GM13976 (cell line): ENCODE measurements at regions of chr9 and their contacts with region 1.

Region 1: GRCh38 chr9:71822456-71822855 is 54.1 kb upstream of the CEMIP2 start:
- DNase-seq: no peak
- CTCF ChIP-seq: no peak

Region 2: DNA sequence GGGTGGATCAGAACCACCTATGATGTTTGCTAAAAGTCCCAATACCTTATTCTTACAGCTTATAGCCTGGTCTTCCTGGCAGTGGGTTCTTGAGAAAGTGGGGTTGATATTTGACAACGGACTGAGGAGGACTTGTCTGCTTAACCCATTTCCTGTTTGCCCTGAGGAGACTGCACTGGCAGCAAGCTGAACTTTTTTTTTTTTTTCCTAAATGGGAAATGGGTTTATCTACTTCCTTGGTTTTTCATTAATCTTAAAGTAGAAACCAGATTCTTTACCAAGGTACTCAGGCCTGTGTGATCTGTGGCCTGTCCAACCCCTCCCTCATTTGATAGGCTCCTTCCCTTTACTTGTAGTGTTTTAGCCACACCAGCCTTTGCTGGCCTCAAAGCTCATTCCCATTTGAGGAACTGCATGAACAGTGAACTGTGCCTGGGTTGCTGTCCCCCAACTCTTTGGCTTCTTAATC is 190.9 kb after region 1 on chr9:
- in situ Hi-C with region 1: loop called (anchors 10 kb)
- DNase-seq: no peak
- CTCF ChIP-seq: no peak